Activated B cell treated with CpG ODN at 0.5 μM for 24 hours (primary cell): ENCODE measurements at regions of chr10 and their contacts with region 1.

Region 1: DNA sequence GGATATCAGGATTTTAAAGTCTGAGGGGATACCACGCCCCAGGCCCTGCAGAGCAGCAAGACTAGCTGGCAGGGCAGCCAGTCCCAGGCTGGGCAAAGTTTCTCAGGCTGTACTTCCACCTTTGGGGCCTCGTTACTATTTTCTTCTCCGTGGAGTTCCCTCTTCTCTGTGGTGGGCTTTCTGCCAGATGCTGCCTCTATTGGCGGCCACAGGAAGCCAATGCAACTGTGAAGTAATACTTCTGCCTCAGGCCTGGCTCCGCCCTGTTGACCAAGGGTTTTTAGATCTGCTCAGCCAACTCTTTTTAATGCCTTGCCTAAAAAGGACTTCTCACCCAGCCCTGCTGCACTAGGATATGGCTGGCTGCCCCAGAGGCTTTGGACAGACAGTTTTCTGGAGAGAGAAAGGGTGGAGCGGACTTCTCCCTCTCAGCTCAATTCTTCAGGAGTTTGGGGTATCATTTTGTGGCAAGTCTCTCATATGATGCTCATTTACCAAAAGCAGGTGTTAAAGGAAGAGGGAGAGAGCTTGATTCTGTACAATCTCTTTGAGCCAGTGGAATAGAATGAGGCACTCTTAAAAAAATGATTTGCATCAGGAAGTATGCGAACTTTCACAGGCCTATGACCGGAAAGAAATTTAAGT is 67.4 kb downstream of the HHEX start:
- DNase-seq: peak; percentile 47
- ATAC-seq: peak; percentile 62
- H3K4me3 Mint-ChIP-seq: peak overlapping the region; percentile 76
- H3K27ac Mint-ChIP-seq: peak overlapping the region; percentile 96
- H3K4me1 Mint-ChIP-seq: peaks cover 83% of the 10 kb centered on the region
- H3K27me3 Mint-ChIP-seq: no peaks in the 10 kb centered on the region
- CTCF ChIP-seq: no peak

Region 2: GRCh38 chr10:91434041-91434440 is 1323.1 kb before region 1 on chr10:
- CTCF ChIA-PET with region 1: no interaction called
- POLR2A ChIA-PET with region 1: no interaction called
- intact Hi-C with region 1: no loop called
- DNase-seq: no peak
- ATAC-seq: no peak
- H3K4me3 Mint-ChIP-seq: no peak overlapping the region
- H3K27ac Mint-ChIP-seq: no peak overlapping the region
- H3K4me1 Mint-ChIP-seq: peaks cover 2% of the 10 kb centered on the region
- H3K27me3 Mint-ChIP-seq: no peaks in the 10 kb centered on the region
- CTCF ChIP-seq: no peak

Region 3: DNA sequence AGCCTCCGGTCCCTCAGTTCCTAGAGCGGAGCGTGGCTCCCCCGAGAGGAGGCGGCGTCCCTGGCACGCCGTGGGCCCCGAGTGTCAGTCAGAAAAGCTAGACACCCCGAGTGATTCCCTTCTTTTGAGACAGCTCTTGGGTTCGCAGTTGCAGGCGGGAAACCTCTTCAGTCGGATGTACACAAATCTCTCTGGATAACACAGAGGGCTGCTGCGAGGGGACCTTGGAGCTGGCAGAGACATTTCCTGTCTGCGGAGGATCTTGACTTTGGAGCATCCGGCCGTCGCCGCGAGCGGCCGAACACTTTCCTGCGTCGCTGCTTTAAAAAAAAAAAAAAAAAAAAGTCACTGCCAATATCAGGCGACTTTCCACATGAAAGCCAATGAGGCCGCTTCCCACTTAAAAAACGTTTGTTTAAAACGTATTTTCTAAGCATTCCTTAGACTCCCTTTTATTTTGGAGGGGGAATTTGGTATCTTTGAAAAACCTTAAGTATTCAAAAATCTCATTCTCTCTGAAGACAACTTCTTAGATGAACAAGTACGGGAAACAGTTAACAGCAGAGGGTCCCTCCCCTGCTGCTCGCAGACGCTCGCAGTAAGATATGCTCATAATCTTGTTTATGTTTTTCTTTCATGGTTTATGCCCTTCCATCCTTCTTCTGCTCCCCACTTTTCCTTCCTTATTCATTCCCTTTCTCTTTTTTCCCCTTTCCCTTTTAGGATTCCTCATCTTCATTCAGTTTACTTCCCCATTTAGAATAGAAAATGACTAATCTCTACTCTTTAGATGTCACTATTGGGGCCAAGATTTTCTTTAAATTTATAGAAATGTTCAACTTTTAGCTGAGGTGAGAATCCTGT is 57.4 kb before region 1 on chr10:
- CTCF ChIA-PET with region 1: interaction called, 3 read pairs
- POLR2A ChIA-PET with region 1: interaction called, 12 read pairs
- intact Hi-C with region 1: loop called (anchors 2 kb)
- DNase-seq: peak; percentile 46
- ATAC-seq: peak; percentile 64
- H3K4me3 Mint-ChIP-seq: peak overlapping the region; percentile 88
- H3K27ac Mint-ChIP-seq: peak overlapping the region; percentile 85
- H3K4me1 Mint-ChIP-seq: peaks cover 72% of the 10 kb centered on the region
- H3K27me3 Mint-ChIP-seq: no peaks in the 10 kb centered on the region
- CTCF ChIP-seq: no peak

Region 4: DNA sequence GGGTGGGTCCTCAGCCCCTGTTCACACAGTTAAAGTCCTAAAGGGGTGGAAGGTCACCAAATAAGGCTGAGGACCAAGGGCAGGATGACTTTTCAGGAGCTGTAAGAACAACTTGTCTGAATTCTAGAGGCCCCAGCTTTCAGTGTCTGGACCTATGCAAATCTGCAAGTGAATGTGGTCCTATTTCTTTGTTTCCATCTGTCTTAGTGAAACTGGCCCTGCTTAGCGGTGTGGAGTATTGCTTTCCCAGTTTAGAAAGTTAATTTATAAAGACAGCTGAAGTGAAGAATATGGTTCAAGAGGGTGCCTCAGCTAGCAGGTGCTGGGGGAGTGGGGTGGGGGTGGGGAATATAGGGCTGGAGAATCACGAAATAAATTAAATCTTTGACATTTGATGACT is 27.3 kb before region 1 on chr10:
- CTCF ChIA-PET with region 1: no interaction called
- POLR2A ChIA-PET with region 1: interaction called, 10 read pairs
- intact Hi-C with region 1: no loop called
- DNase-seq: no peak
- ATAC-seq: peak; percentile 72
- H3K4me3 Mint-ChIP-seq: no peak overlapping the region
- H3K27ac Mint-ChIP-seq: no peak overlapping the region
- H3K4me1 Mint-ChIP-seq: peaks cover 50% of the 10 kb centered on the region
- H3K27me3 Mint-ChIP-seq: no peaks in the 10 kb centered on the region
- CTCF ChIP-seq: no peak

Region 5: DNA sequence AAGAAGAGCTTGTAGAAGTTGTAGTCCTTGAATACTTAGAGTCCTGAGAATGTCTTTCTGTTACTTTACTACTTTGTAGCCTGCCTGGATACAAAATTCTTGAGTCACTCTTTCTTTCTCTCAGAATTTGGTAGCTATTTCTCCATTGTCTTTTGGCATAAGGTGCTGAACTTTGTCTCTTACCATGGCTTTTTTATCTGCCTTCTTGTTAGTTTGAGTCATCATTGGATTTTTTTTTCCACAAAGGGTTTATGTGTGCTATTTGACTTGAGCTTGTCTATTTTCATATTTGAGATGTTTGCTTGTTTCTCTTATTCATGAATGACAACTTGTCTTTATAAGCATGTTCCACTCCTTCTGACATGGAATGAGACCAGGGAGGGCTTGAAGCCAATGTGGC is 16.6 kb after region 1 on chr10:
- CTCF ChIA-PET with region 1: no interaction called
- POLR2A ChIA-PET with region 1: no interaction called
- intact Hi-C with region 1: loop called (anchors 2 kb)
- DNase-seq: no peak
- ATAC-seq: no peak
- H3K4me3 Mint-ChIP-seq: no peak overlapping the region
- H3K27ac Mint-ChIP-seq: peak overlapping the region; percentile 4
- H3K4me1 Mint-ChIP-seq: peaks cover 6% of the 10 kb centered on the region
- H3K27me3 Mint-ChIP-seq: no peaks in the 10 kb centered on the region
- CTCF ChIP-seq: no peak

Region 6: DNA sequence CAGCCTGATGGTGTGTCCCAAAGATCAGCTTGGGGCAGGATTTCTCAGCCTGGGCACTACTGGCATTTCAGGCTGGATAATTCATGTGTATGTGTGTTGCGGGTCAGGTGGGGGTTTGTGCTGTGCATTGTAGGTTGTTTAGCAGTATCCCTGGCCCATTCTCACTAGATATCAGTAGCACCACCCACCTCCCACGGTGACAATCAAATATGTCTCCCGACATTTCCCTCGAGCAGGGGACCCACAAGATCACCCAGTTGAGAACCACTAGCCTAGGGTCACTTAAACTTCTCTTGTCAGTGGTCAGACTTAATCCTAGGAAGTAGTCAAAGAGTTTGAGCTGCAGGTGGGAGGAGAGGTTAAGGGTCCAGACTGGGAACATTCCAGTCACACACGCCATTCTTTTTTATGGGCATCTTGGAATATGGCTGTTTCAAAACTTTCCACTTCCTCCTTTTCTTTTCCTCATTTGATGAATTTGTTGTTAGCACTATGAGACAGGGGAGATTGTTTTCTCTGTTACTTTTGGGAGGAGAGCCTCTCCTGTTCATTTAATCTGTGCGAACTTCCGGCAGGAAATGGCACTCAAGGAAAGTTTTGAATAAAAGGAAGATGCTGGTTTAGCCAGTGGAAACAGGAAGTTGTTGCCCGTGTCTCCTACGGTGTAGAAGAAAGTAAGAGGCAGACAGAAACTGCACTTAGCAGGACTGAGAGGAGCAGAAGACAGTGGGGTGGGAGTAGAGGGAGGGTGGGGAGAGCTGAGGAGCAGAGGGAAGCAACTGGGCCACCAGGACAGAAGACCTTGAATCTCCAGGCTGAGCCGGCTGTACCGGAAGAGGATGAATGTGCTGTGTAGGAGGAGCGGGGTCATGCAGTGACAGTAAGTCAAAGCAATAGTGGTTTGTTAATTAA is 73.5 kb after region 1 on chr10:
- CTCF ChIA-PET with region 1: no interaction called
- POLR2A ChIA-PET with region 1: interaction called, 3 read pairs
- intact Hi-C with region 1: loop called (anchors 1 kb)
- DNase-seq: no peak
- ATAC-seq: peak; percentile 88
- H3K4me3 Mint-ChIP-seq: peak overlapping the region; percentile 87
- H3K27ac Mint-ChIP-seq: peak overlapping the region; percentile 88
- H3K4me1 Mint-ChIP-seq: peaks cover 33% of the 10 kb centered on the region
- H3K27me3 Mint-ChIP-seq: no peaks in the 10 kb centered on the region
- CTCF ChIP-seq: no peak

Region 7: DNA sequence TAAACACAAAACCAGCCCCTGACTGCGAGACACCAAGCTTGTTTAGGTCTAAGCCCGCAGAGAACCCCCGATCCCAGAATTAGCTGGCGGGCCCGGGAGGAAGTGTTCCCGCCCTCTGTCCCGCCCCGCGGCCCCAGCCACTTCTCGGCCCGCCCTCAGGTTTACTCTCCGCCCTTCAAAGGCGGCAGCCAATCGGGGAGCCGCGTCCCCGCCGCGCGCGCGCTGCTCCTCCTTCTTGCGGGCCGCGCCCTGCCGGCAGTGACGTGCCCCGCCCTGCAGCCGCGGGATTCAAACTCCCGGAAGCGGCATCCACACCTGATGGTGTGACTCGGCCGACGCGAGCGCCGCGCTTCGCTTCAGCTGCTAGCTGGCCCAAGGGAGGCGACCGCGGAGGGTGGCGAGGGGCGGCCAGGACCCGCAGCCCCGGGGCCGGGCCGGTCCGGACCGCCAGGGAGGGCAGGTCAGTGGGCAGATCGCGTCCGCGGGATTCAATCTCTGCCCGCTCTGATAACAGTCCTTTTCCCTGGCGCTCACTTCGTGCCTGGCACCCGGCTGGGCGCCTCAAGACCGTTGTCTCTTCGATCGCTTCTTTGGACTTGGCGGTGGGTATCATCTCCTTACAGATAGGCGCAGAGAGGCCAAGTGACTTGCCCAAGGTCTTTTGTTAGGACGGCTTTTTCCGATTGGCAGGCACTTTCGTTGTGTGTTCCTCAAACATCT is 739.3 kb after region 1 on chr10 and contains the start of gene CEP55:
- CTCF ChIA-PET with region 1: no interaction called
- POLR2A ChIA-PET with region 1: no interaction called
- intact Hi-C with region 1: loop called (anchors 10 kb)
- DNase-seq: peak; percentile 94
- ATAC-seq: peak; percentile 100
- H3K4me3 Mint-ChIP-seq: peak within 1 kb of the TSS; percentile 92
- H3K27ac Mint-ChIP-seq: peak within 1 kb of the TSS; percentile 74
- H3K4me1 Mint-ChIP-seq: peaks cover 16% of the 10 kb centered on the region
- H3K27me3 Mint-ChIP-seq: no peaks in the 10 kb centered on the region
- CTCF ChIP-seq: no peak
- total RNA-seq, gene CEP55: 0.95 and 1.6 TPM in 2 replicates